Tibial artery (tissue), 4 donors: ENCODE measurements at regions of chr12 and their contacts with region 1.

Region 1: DNA sequence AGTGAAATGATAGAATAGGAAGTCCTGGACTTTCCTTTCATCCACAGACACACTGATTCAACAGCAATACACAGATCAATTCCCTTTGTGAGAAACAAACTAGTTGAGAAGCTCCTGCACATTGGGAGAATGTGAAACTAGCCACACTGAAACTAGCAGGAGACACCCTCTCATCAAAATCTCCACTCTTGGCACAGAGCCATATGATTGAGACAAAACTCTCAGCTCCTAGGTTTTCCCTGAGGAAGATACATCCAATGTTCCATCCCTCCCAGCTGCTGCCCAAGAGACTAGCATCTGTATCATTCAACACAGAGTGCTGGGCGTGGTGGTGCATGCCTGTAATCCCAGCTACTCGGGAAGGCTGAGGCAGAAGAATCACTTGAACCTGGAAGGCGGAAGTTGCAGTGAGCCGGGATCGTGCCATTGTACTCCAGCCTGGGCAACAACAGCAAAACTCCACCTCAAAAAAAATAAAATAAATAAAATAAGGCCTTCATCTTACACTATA is 51.8 kb upstream of the MTERF2 start:
- DNase-seq: no peak
- H3K4me3 ChIP-seq: no peak overlapping the region
- H3K27ac ChIP-seq: no peak overlapping the region
- H3K4me1 ChIP-seq: no peaks in the 10 kb centered on the region
- H3K27me3 ChIP-seq: no peaks in the 10 kb centered on the region
- CTCF ChIP-seq: no peak

Region 2: GRCh38 chr12:107093417-107094182 is 54.9 kb after region 1 on chr12 and contains the start of gene CRY1:
- intact Hi-C with region 1: loop called (anchors 10 kb)
- DNase-seq: peak; percentile 95 to 97
- H3K4me3 ChIP-seq: peak within 1 kb of the TSS; percentile 69 to 72
- H3K27ac ChIP-seq: peak within 1 kb of the TSS; percentile 88 to 94
- H3K4me1 ChIP-seq: peaks cover 0 to 26% (median 17%) of the 10 kb centered on the region in 4 donors
- H3K27me3 ChIP-seq: no peaks in the 10 kb centered on the region
- CTCF ChIP-seq: no peak

Region 3: GRCh38 chr12:108119126-108119976 is 1080.6 kb after region 1 on chr12:
- intact Hi-C with region 1: no loop called
- DNase-seq: no peak
- H3K4me3 ChIP-seq: no peak overlapping the region
- H3K27ac ChIP-seq: no peak overlapping the region
- H3K4me1 ChIP-seq: peaks cover 0 to 50% (median 22%) of the 10 kb centered on the region in 4 donors
- H3K27me3 ChIP-seq: no peaks in the 10 kb centered on the region
- CTCF ChIP-seq: no peak